Lower leg skin (tissue), 4 donors: ENCODE measurements at regions of chr1 and their contacts with region 1.

Region 1: DNA sequence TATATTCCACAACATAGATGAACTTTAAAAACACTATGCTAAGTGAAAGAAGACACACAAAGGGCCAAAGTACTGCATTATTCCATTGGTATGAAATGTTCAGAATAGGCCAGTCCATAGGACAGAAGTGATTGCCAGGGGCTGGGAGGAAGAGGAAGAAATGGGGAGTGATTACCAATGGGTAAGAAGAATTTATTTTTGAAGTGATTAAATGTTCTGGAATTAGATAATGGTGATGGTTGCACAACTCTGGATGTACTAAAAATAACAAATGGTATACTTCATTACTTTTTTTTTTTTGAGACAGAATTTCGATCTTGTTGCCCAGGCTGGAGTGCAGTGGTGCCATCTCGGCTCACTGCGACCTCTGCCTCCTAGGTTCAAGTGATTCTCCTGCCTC is 61.7 kb downstream of the CHD5 start:
- DNase-seq: no peak
- H3K4me3 ChIP-seq: no peak overlapping the region
- CTCF ChIP-seq: no peak
- POLR2A ChIP-seq: no peak

Region 2: DNA sequence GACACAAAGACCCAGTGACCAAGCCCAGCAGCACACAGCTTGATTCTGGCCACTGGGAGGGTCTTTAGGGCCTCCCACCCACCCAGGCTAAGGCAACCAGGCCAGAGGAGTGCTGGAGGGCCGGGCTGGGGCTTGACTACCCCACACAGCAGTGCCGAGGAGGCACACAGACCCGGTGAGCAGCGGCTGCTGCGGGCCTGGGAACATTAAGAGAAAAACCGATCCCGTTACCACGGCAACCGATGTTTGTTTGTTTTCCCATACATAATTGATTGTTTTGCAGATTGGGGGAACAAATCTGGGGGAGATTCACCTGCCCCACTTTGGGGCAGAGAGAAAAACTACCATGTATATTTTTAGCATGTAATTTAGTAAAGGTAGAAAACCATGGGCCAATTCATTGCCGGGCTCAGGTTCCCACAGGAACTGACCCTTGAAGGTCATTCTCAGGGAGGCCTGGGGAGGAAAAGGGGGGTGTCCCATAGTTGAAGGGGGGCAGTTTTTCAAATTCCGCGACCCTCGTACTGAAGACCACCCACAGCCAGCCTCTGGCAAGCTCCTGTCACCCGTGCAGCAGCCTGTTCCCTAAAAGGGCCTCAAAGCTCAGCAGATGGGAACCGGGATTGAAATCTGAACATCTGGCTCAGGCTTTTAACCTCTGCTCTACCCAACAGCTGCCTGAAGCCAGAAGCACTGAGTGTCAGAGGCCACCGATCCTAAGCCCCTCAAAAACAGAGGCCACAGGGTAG is 26.4 kb after region 1 on chr1:
- intact Hi-C with region 1: loop called (anchors 1 kb)
- DNase-seq: no peak
- H3K4me3 ChIP-seq: no peak overlapping the region
- CTCF ChIP-seq: no peak
- POLR2A ChIP-seq: no peak

Region 3: DNA sequence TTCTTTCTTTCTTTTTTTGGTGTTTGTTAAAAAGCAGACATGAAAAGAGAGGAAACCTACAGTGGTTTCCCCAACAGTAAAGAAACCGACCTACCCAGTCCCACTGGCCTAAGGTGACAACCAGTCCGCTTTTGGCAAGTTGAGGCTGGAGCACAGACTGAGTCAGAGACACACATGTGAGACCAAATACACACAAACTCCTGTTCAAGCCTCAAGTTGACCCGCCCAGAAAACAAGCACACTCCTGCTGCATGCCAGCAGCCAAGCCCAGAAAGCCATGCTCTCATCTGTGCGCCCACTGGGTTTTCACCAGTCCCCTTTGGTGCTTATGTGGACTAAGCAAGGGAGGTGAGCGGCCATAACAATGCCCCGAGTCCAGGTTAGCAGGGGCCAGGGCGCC is 207.1 kb after region 1 on chr1:
- intact Hi-C with region 1: no loop called
- DNase-seq: peak in 1 of 2 donors; percentile 39
- H3K4me3 ChIP-seq: no peak overlapping the region
- CTCF ChIP-seq: no peak
- POLR2A ChIP-seq: no peak